HCT116 (cell line): ENCODE measurements at regions of chr1 and their contacts with region 1.

Region 1: DNA sequence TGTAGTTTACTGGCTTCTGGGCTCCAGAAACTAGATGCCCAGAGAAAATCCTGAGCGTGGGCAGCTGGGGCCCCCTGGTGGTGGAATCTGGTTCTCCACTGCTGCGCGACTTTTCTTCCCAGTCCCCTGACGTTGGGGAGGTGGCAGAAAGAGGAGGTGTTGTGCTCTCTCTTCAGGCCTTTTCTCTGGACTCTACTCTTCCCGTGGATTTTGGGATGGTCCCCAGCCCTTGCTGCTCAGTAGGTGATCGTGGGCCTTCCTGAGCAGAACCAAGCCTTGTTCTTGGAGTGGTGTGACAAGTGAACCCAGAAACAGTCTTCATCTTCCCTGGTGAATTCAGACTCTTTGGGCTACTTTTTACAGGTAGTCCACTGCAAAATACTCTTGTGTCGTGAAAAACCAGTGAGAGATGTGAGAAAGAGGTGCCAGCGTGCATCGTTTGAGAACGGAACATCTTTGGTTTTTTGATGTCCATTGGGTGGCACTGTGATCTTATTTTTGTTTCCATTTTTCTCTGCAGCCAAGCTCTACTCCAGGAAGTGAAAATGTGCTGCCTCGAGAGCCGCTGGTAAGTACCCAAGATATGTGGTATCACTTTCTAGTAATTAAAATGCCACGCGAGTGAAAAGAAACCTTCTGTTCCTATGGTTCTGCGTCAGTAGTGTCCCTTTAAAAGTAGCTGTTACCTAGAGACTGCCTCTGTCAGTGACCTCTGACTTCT is 20.2 kb downstream of the PEX14 start:
- DNase-seq: no peak
- ATAC-seq: peak; percentile 95
- H3K4me3 ChIP-seq: no peak overlapping the region
- H3K27ac ChIP-seq: no peak overlapping the region
- H3K4me1 ChIP-seq: peaks cover 0 to 8% of the 10 kb centered on the region in 2 experiments; a peak in 3 of 4 replicates
- H3K27me3 ChIP-seq: no peaks in the 10 kb centered on the region
- CTCF ChIP-seq: peak; percentile 86 to 93 (median 93)
- POLR2A ChIP-seq: no peak
- RAD21 ChIP-seq: peak; percentile 90

Region 2: DNA sequence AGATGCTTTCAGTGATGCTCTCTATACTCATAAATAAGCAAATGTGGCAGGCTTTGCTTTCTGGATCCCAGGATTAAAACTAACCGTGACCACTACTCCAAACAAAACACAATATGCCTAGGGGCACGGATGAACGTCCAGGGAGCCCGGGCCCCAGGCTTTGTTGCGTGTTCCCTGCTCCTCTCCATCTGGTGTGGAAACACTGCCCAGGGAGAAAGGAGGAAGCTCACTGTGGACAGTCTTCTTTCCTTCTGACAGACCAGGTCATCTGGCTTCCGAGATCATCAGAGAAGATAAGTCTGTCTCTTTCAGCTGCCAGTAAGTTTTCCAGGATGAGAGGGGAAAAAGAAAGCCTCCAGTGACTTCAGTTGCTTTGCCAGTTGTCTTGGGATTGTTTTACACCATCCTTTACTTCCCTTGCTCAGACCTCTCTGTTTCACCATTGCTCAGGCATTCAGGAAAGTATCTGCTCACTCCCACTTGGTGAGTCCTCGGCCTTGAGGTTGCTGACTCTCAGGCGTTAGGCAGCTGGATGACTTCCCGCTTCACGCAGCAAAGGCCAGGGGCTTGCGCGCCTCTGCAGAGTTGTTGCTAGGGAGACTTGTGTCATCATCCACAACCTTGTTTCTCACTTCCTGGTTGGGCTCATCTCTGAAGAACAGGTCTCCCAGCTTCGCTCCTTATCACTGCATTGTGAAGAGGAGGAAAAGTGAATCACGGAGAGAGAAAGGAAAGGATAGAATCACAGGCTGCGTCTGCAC is 116.7 kb before region 1 on chr1:
- CTCF ChIA-PET with region 1: interaction called, 4 read pairs
- POLR2A ChIA-PET with region 1: no interaction called
- RAD21 ChIA-PET with region 1: no interaction called
- intact Hi-C with region 1: loop called (anchors 1 kb)
- DNase-seq: no peak
- ATAC-seq: no peak
- H3K4me3 ChIP-seq: no peak overlapping the region
- H3K27ac ChIP-seq: no peak overlapping the region
- H3K4me1 ChIP-seq: no peaks in the 10 kb centered on the region
- H3K27me3 ChIP-seq: no peaks in the 10 kb centered on the region
- CTCF ChIP-seq: no peak
- POLR2A ChIP-seq: no peak
- RAD21 ChIP-seq: no peak

Region 3: DNA sequence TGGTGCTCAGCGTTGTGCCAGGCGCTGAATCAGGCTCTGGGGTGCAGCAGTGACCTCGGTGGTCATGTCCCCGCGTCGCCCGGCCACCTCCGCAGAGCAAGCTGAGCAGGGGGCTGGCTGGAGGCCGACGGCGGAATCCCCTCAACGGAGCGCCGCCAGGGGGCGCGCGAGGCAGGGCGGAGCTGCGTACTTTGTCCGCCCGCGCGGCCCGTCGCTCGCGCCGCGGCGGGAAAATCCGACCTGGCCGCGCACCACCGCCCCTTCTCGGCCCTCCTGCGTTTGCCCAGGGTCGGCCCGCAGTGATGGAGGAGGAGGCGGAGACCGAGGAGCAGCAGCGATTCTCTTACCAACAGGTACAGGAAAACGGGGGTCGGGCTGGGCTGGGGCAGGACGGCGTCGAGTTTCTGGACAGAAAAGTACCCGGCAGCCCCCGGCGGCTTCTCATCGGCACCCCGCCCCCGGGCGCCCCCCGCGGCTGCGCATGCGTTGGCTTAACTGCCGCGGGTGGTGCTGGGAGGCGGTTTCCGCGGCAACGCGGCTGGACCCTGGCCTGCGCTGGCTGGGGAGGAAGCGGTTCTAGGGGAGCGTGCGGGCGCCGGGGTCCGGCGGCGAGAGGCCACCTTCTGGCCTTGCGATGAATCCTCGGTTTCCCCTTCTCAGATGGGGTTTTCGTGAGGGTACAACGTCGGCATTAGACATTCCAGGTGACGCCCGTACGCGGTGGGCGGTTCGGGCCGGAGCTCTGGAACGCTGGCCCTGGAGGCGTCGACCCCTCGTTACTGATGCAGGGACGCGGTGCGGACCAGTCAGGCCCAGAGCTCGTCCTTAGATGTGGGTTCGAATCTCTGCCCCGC is 64.5 kb before region 1 on chr1 and contains the start of gene CENPS:
- CTCF ChIA-PET with region 1: interaction called, 25 read pairs
- POLR2A ChIA-PET with region 1: interaction called, 3 read pairs
- RAD21 ChIA-PET with region 1: interaction called in 1 of 2 experiments, 5 read pairs
- intact Hi-C with region 1: loop called (anchors 1 kb)
- DNase-seq: peak; percentile 68
- ATAC-seq: peak; percentile 86
- H3K4me3 ChIP-seq: peak within 1 kb of the TSS; percentile 67 to 90
- H3K27ac ChIP-seq: peak within 1 kb of the TSS; percentile 66
- H3K4me1 ChIP-seq: peaks cover 2 to 19% of the 10 kb centered on the region in 2 experiments; a peak in 3 of 4 replicates
- H3K27me3 ChIP-seq: no peaks in the 10 kb centered on the region
- CTCF ChIP-seq: peak; percentile 76 to 86 (median 84)
- POLR2A ChIP-seq: peak; percentile 70
- RAD21 ChIP-seq: peak; percentile 76
- total RNA-seq, gene CENPS: 21.9 TPM

Region 4: DNA sequence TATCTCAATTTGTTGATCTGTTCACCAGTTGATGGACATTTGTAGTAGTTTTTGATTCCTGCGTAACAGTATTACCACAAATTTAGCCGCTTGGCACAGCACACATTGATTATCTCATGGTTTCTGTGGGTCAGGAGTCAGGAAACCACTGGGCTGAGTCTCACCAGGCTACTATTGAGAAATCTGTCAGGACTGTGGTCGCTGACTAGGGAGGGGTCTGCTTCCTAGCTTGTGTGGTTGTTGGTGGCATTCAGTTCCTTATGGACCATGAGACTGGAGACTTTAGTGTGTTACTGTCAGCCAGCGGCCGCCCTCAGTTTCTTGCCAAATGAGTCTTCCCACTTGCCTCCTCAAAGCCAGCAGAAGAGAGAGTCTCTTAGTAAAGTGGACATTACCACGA is 10.4 kb before region 1 on chr1:
- CTCF ChIA-PET with region 1: interaction called, 13 read pairs
- POLR2A ChIA-PET with region 1: no interaction called
- RAD21 ChIA-PET with region 1: no interaction called
- intact Hi-C with region 1: no loop called
- DNase-seq: no peak
- ATAC-seq: no peak
- H3K4me3 ChIP-seq: no peak overlapping the region
- H3K27ac ChIP-seq: no peak overlapping the region
- H3K4me1 ChIP-seq: no peaks in the 10 kb centered on the region
- H3K27me3 ChIP-seq: no peaks in the 10 kb centered on the region
- CTCF ChIP-seq: no peak
- POLR2A ChIP-seq: no peak
- RAD21 ChIP-seq: no peak

Region 5: GRCh38 chr1:10507111-10507879 is 12.4 kb after region 1 on chr1:
- CTCF ChIA-PET with region 1: interaction called, 18 read pairs
- POLR2A ChIA-PET with region 1: no interaction called
- RAD21 ChIA-PET with region 1: no interaction called
- intact Hi-C with region 1: no loop called
- DNase-seq: peak; percentile 41
- ATAC-seq: peak; percentile 91
- H3K4me3 ChIP-seq: no peak overlapping the region
- H3K27ac ChIP-seq: no peak overlapping the region
- H3K4me1 ChIP-seq: peaks cover 17 to 30% of the 10 kb centered on the region in 2 experiments
- H3K27me3 ChIP-seq: no peaks in the 10 kb centered on the region
- CTCF ChIP-seq: peak; percentile 86 to 96 (median 94)
- POLR2A ChIP-seq: no peak
- RAD21 ChIP-seq: peak; percentile 92